ENCODE measurements at regions of chr3 and their contacts with region 1.

Region 1: GRCh38 chr3:112765531-112765930 is 81.1 kb downstream of the CD200R1L start:
- DNase-seq: no peak
- ATAC-seq: no peak
- H3K4me3 ChIP-seq: no peak overlapping the region
- H3K27ac ChIP-seq: no peak overlapping the region
- H3K4me1 ChIP-seq: peaks cover 9% of the 10 kb centered on the region
- H3K27me3 ChIP-seq: no peaks in the 10 kb centered on the region
- CTCF ChIP-seq: no peak
- POLR2A ChIP-seq: no peak
- RAD21 ChIP-seq: no peak

Region 2: DNA sequence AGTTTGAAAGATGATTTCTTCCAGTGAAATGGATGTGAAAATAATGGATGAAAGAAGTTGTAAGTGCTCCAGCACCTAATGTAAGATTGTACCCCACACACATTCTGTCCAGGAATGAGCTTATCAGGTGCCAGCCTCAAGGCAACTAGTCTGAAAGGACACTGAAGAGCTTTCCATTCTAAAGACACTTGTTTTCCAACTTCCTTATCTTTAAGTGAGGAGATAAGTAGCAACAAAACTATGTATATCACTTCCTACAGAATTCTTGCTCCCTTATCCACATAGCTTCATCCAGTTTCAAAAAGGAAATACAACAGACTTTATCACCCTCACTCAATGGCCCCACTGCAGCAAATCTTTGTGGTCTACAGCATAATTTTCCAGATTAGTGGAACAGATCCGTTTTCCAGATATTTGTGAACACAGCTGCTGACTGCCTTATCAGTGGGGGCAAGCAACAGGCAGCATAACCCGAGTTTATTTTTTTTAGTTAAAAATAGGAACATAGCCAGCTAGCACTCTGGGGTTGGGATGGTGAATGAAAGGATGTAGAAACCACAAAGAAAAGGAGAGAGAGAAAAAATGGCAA is 20.6 kb after region 1 on chr3:
- CTCF ChIA-PET with region 1: no interaction called
- POLR2A ChIA-PET with region 1: no interaction called
- dilution Hi-C with region 1: no loop called
- in situ Hi-C with region 1: no loop called
- intact Hi-C with region 1: no loop called
- DNase-seq: peak; percentile 73
- ATAC-seq: peak; percentile 64
- H3K4me3 ChIP-seq: no peak overlapping the region
- H3K27ac ChIP-seq: peak overlapping the region; percentile 57; the same call in 1 of the 2 replicates
- H3K4me1 ChIP-seq: peaks cover 10% of the 10 kb centered on the region
- H3K27me3 ChIP-seq: no peaks in the 10 kb centered on the region
- CTCF ChIP-seq: no peak
- POLR2A ChIP-seq: no peak
- RAD21 ChIP-seq: no peak

Region 3: GRCh38 chr3:113008117-113008516 is 242.6 kb after region 1 on chr3:
- CTCF ChIA-PET with region 1: no interaction called
- POLR2A ChIA-PET with region 1: interaction called, 26 read pairs
- dilution Hi-C with region 1: no loop called
- in situ Hi-C with region 1: no loop called
- intact Hi-C with region 1: no loop called
- DNase-seq: peak; percentile 72
- ATAC-seq: peak; percentile 80
- H3K4me3 ChIP-seq: no peak overlapping the region
- H3K27ac ChIP-seq: no peak overlapping the region
- H3K4me1 ChIP-seq: peaks cover 2% of the 10 kb centered on the region; the same call in 1 of the 2 replicates
- H3K27me3 ChIP-seq: no peaks in the 10 kb centered on the region
- CTCF ChIP-seq: no peak
- POLR2A ChIP-seq: no peak
- RAD21 ChIP-seq: no peak